Activated B cell treated with CpG ODN at 0.5 μM for 24 hours (primary cell): ENCODE measurements at regions of chr12 and their contacts with region 1.

Region 1: DNA sequence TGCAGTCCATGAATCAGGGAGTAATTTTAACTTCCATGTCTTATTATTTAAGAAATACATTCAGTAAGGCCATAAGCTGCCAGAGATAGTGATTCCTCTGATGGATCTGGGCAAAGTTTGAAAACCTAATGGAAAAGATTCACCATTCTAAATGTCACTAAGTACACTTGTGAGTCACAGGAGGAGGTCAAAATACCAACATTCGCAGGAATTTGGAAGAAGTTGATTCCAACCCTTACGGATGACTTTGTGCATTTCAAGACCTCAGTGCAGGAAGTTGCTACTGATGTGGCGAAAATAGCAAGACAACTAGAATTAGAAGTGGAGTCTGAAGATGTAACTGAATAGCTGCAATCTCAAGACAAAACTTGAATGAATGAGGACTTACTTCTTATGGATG is 69.8 kb downstream of the OSBPL8 start:
- DNase-seq: no peak
- ATAC-seq: no peak
- H3K4me3 Mint-ChIP-seq: no peak overlapping the region
- H3K27ac Mint-ChIP-seq: no peak overlapping the region
- H3K4me1 Mint-ChIP-seq: peaks cover 16% of the 10 kb centered on the region
- H3K27me3 Mint-ChIP-seq: no peaks in the 10 kb centered on the region
- CTCF ChIP-seq: no peak

Region 2: GRCh38 chr12:76470028-76470939 is 19.5 kb before region 1 on chr12:
- CTCF ChIA-PET with region 1: no interaction called
- POLR2A ChIA-PET with region 1: no interaction called
- intact Hi-C with region 1: loop called (anchors 2 kb)
- DNase-seq: no peak
- ATAC-seq: peak; percentile 84
- H3K4me3 Mint-ChIP-seq: no peak overlapping the region
- H3K27ac Mint-ChIP-seq: no peak overlapping the region
- H3K4me1 Mint-ChIP-seq: peaks cover 12% of the 10 kb centered on the region
- H3K27me3 Mint-ChIP-seq: no peaks in the 10 kb centered on the region
- CTCF ChIP-seq: no peak